Activated CD8-positive, alpha-beta memory T cell treated with anti-CD3 and anti-CD28 coated beads, Interleukin-2, amount 10 ng/mL, durations not matched to agents 7 days and 5 days (primary cell): ENCODE measurements at regions of chr15 and their contacts with region 1.

Region 1: DNA sequence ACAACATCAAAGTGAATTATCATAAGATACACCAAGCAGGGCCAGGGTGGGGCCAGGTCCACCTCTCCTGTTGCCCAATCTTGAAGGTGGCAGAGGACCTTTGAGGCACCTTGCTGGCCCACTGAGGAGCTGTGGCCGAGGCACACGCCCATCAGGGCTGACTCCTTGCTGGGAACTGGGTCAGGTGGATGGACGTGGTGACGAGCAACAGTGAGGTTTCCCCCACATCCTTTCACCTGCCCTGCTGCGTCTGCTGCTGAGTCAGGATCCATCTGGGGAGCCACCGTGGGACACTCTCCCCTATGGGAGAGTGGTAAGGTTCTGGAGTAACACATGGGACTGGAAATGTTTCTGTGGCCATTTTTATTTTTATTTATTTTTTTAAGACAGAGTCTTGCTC is 17.3 kb upstream of the FURIN start:
- DNase-seq: peak; percentile 85
- ATAC-seq: peak; percentile 37
- H3K4me3 Mint-ChIP-seq: peak overlapping the region; percentile 60
- H3K27ac Mint-ChIP-seq: peak overlapping the region; percentile 98
- H3K4me1 Mint-ChIP-seq: peaks cover 80% of the 10 kb centered on the region
- H3K27me3 Mint-ChIP-seq: no peaks in the 10 kb centered on the region

Region 2: GRCh38 chr15:90701880-90702630 is 149.1 kb before region 1 on chr15:
- CTCF ChIA-PET with region 1: no interaction called
- DNase-seq: no peak
- ATAC-seq: no peak
- H3K4me3 Mint-ChIP-seq: no peak overlapping the region
- H3K27ac Mint-ChIP-seq: no peak overlapping the region
- H3K4me1 Mint-ChIP-seq: peaks cover 12% of the 10 kb centered on the region
- H3K27me3 Mint-ChIP-seq: no peaks in the 10 kb centered on the region

Region 3: DNA sequence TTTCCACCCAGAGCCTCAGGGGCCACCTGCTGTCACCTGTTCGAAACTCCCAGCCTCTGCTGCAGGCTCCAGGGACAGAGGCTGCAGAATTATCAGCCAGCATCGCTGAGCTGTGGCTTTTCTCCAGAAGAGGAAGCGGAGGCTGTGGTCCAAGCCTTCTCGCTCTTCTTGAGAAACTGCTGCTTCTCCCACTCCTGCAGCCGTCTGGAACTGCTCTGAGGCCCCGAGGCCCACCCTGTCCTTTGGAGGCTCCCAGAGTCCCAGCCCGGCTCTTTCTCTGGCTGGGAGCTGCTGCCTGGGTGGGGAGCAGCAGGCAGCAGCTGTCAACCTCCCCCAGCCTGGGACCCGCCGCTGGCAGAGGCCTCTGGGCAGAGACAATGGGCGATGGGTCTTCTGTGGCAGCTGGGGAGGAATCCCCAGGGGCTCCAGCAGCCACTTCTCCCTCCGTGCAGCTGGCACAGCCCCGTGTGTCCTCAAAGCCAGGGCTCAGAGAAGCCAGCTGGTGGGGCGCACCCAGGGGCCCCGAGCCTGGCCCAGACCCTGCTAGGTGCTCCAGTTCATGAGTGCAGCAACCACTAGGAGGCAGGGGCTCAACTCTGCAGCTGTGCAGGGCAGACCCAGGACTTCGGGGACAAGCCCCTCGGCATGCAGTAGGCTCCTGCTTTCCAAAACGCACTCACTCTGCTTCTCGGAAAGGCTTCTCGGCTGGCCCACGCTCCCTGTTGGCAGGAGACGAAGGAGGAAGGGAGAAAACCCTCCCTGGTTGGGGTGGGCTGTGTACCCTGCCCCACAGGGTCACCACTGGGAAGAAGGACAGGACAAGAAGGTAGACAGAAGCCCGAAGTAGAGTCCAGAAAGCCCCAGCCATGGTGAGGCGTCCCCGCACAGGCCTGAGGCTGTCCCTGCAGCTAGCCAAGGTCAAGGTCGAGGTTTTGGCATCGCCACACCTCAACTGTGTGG is 32.6 kb before region 1 on chr15:
- CTCF ChIA-PET with region 1: interaction called, 26 read pairs
- DNase-seq: peak; percentile 65
- ATAC-seq: peak; percentile 23
- H3K4me3 Mint-ChIP-seq: peak overlapping the region; percentile 8
- H3K27ac Mint-ChIP-seq: peak overlapping the region; percentile 96
- H3K4me1 Mint-ChIP-seq: peaks cover 83% of the 10 kb centered on the region
- H3K27me3 Mint-ChIP-seq: no peaks in the 10 kb centered on the region

Region 4: DNA sequence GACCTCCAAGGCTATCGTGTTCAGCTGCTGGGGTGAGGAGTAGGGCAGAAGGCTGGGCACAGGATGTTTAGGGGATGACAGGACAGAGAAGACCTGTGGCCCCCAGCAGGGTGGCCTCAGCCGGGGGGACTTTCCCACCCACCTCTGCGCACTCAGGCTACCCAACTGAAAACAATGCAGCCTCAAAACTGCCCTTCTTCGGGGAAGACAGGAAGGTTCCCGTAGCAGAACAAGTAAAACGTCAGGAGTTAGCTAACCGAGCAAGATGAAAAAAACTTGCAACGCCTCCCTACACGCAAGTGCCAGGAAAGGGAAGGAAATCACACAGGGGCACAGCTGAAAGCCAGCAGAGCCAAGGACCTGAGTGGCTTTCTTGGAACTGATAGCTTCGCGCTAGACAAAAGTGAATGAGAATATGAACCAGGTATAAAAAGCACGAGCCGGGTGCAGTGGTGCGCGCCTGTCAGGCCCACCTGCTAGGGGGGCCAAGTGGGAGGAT is 21.1 kb before region 1 on chr15:
- CTCF ChIA-PET with region 1: interaction called, 54 read pairs
- DNase-seq: peak; percentile 88
- ATAC-seq: peak; percentile 85
- H3K4me3 Mint-ChIP-seq: peak overlapping the region; percentile 23
- H3K27ac Mint-ChIP-seq: peak overlapping the region; percentile 93
- H3K4me1 Mint-ChIP-seq: peaks cover 82% of the 10 kb centered on the region
- H3K27me3 Mint-ChIP-seq: no peaks in the 10 kb centered on the region

Region 5: GRCh38 chr15:90839187-90840071 is 11.7 kb before region 1 on chr15:
- CTCF ChIA-PET with region 1: interaction called, 54 read pairs
- DNase-seq: no peak
- ATAC-seq: no peak
- H3K4me3 Mint-ChIP-seq: peak overlapping the region; percentile 80
- H3K27ac Mint-ChIP-seq: peak overlapping the region; percentile 95
- H3K4me1 Mint-ChIP-seq: peaks cover 83% of the 10 kb centered on the region
- H3K27me3 Mint-ChIP-seq: no peaks in the 10 kb centered on the region

Region 6: DNA sequence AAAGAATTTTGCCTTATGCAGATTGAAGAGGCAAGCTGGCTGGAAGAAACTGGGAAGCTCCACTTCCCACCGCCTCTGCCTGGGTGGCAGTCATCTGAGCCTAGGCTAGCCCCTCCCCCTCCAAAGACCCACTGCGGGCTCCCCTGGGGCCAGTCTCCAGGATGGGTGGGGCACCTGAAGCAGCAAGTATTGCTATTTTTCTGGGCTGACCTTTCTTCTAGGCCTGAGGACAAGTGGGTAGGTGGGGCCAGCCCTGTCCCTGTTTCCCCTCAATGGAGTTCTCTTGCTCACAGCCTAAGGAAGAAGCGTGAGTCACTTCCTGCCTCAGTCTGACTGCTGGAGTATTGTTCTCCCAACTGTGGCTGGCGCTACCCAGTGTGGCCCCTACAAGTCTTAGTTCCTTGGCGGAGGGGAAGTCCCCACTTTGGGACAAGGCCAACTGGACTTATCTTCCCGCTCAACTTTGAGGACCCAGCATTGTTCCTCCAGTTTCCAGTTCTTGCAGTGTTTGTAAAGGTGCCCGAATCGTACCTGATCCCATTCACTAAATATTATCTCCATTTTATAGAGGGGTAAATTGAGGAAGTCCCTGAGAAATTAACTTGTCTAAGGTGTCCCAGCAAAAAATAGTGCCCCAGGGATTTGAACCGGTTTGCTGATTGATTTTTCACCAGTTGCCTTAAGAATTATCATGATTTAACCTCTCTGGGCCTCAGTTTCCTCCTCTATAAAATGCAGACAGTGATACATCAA is 18.7 kb after region 1 on chr15:
- CTCF ChIA-PET with region 1: interaction called, 10 read pairs
- DNase-seq: peak; percentile 70
- ATAC-seq: peak; percentile 37
- H3K4me3 Mint-ChIP-seq: peak overlapping the region; percentile 83
- H3K27ac Mint-ChIP-seq: peak overlapping the region; percentile 86
- H3K4me1 Mint-ChIP-seq: peaks cover 49% of the 10 kb centered on the region
- H3K27me3 Mint-ChIP-seq: no peaks in the 10 kb centered on the region